ENCODE measurements at regions of chr9 and their contacts with region 1.

Region 1: GRCh38 chr9:121201738-121202533 is at the start of gene RAB14:
- DNase-seq: peak; percentile 89
- H3K4me3 ChIP-seq: peak within 1 kb of the TSS; percentile 98
- H3K27me3 ChIP-seq: no peaks in the 10 kb centered on the region
- CTCF ChIP-seq: peak; percentile 74
- polyA plus RNA-seq, gene RAB14: 18.3 and 20.0 TPM in 2 replicates

Region 2: DNA sequence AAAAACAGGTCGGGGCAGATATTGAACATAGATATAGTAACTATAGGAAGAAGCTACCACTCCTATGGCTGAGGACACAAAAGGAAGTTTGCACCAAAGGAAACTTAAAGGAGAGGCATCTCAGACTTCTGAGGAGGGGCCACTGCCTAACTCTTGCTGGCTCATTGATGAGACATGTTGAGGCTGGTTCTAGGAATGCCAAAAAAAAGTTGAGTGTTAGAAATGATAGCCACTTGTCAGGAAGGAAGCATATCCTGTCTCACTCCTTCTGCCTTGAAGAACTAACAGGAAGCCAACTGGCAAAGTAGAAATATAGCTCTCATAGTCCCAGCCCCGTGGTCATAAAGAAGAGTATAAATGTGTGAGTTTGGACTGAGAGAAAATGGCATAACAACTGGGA is 191.4 kb after region 1 on chr9:
- CTCF ChIA-PET with region 1: interaction called, 6 read pairs
- POLR2A ChIA-PET with region 1: interaction called, 16 read pairs
- DNase-seq: no peak
- H3K4me3 ChIP-seq: no peak overlapping the region
- H3K27me3 ChIP-seq: no peaks in the 10 kb centered on the region
- CTCF ChIP-seq: no peak

Region 3: GRCh38 chr9:121550569-121551512 is 348.9 kb after region 1 on chr9:
- CTCF ChIA-PET with region 1: no interaction called
- POLR2A ChIA-PET with region 1: no interaction called
- DNase-seq: no peak
- H3K4me3 ChIP-seq: peak overlapping the region; percentile 28
- H3K27me3 ChIP-seq: peaks cover 12% of the 10 kb centered on the region
- CTCF ChIP-seq: peak; percentile 94

Measured in BJ (cell line).